Activated B cell treated with CpG ODN at 0.5 μM for 24 hours (primary cell): ENCODE measurements at regions of chr11 and their contacts with region 1.

Region 1: GRCh38 chr11:103662880-103663279 is 373.6 kb upstream of the DDI1 start:
- DNase-seq: no peak
- ATAC-seq: peak; percentile 92
- H3K4me3 Mint-ChIP-seq: peak overlapping the region; percentile 44
- H3K27ac Mint-ChIP-seq: peak overlapping the region; percentile 54
- H3K4me1 Mint-ChIP-seq: peaks cover 18% of the 10 kb centered on the region
- H3K27me3 Mint-ChIP-seq: no peaks in the 10 kb centered on the region
- CTCF ChIP-seq: no peak

Region 2: GRCh38 chr11:103648670-103649402 is 14.0 kb before region 1 on chr11:
- CTCF ChIA-PET with region 1: no interaction called
- POLR2A ChIA-PET with region 1: interaction called, 10 read pairs
- intact Hi-C with region 1: no loop called
- DNase-seq: no peak
- ATAC-seq: peak; percentile 87
- H3K4me3 Mint-ChIP-seq: peak overlapping the region; percentile 35
- H3K27ac Mint-ChIP-seq: peak overlapping the region; percentile 68
- H3K4me1 Mint-ChIP-seq: peaks cover 45% of the 10 kb centered on the region
- H3K27me3 Mint-ChIP-seq: no peaks in the 10 kb centered on the region
- CTCF ChIP-seq: no peak